WTC11 (cell line): ENCODE measurements at regions of chr13 and their contacts with region 1.

Region 1: DNA sequence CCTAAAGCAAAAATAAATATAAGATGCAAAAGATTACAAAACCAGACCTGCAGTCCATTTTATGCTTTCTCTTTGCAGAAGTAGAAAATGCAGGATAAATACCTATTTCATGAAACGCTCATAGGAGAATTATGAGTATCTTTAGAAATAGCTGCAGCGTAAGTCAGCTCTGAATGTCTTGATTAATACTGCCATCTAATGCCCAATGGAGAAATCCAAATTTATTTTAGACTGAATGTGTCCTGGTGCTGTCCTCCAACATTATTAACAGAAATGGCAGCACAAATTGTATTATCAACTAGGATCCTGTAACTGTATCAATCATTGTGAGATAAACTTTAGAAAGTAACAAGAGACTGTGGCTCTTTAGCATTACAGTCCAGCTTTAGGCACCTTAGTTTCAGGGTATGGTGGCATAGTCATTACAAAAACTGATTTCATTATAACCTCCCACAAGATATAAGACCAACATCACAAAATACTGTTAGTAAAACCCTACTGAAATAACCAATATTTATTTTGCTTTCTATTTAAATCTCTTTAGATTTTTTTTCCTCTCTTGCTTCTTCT is 162.1 kb upstream of the MIR17HG start:
- DNase-seq: no peak
- ATAC-seq: peak; percentile 43; the same call in 1 of the 2 replicates
- H3K4me3 Mint-ChIP-seq: no peak overlapping the region
- H3K27ac Mint-ChIP-seq: no peak overlapping the region
- H3K4me1 Mint-ChIP-seq: no peaks in the 10 kb centered on the region
- H3K27me3 Mint-ChIP-seq: no peaks in the 10 kb centered on the region
- CTCF ChIP-seq: no peak

Region 2: DNA sequence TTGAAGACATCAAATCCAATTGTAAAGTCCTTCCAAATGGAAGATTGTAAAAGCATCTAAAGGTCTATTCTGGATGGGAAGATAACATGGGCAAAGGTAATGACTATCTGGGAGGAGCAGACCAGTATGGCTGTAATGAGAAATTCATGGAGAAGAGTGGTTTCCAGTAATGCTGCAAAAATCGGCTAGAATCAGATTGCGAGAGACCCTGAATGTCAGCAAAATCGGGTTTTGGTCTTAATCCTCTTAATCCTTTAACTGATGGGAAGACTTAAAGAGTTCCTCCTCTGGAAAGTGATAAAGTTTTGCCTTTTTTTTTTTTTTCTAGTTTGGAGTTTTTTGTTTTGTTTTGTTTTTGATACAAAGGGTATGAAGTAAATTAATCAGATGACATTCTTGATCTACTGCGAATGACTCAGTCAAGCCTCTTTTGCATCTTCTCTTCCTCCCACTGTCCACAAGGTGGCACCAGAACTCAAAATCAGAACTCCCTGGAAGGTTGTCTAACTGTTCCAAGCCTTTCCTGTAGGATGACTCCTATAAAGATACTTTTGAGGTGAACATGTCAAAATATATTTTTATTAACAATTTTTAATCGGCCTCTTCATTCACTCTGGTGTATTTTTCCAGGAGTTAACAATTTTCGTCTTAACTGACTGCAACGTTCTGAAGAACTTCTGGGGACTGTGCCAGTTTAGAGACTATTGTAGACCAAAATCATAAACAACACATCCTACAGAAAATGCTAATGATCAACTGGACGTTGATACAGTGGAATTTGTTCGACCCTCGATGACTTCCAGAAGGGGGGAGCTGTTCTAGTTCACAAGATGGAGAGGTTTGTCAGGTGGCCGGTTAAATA is 51.2 kb before region 1 on chr13:
- CTCF ChIA-PET with region 1: interaction called, 19 read pairs
- POLR2A ChIA-PET with region 1: no interaction called
- DNase-seq: peak; percentile 36
- ATAC-seq: peak; percentile 90
- H3K4me3 Mint-ChIP-seq: no peak overlapping the region
- H3K27ac Mint-ChIP-seq: no peak overlapping the region
- H3K4me1 Mint-ChIP-seq: peaks cover 38% of the 10 kb centered on the region
- H3K27me3 Mint-ChIP-seq: peaks cover 3% of the 10 kb centered on the region; the same call in 1 of the 2 replicates
- CTCF ChIP-seq: peak; percentile 59

Region 3: DNA sequence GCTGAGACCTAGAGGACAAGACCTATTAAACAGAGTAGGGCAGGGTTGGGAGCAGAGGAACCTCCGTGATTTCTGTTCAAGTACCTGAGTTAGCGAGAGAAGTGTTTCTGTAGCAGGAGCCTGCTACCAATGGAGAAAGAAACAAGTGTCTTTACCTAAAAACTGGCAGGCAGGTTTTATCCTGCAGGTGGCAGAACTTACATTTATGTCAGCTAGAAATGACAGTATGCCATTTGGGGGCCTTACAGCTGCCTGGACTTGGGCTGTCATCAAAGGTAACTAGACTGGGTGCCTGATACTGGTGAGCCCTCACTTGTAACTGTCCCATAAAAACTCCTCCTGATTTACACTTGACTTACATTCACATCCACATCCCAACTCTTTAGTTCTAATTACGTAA is 23.2 kb before region 1 on chr13:
- CTCF ChIA-PET with region 1: interaction called, 14 read pairs
- POLR2A ChIA-PET with region 1: no interaction called
- DNase-seq: peak; percentile 23
- ATAC-seq: peak; percentile 86
- H3K4me3 Mint-ChIP-seq: no peak overlapping the region
- H3K27ac Mint-ChIP-seq: no peak overlapping the region
- H3K4me1 Mint-ChIP-seq: peaks cover 16% of the 10 kb centered on the region
- H3K27me3 Mint-ChIP-seq: 0 out of 2 replicates have a peak, but pooled peaks cover 3% of the 10 kb centered on the region
- CTCF ChIP-seq: no peak